AG04450 (cell line): ENCODE measurements at regions of chr2 and their contacts with region 1.

Region 1: GRCh38 chr2:121400201-121400600 is 115.2 kb upstream of the TFCP2L1 start:
- DNase-seq: peak; percentile 24
- H3K4me3 ChIP-seq: no peak overlapping the region
- H3K27ac ChIP-seq: no peak overlapping the region
- H3K27me3 ChIP-seq: no peaks in the 10 kb centered on the region
- CTCF ChIP-seq: no peak

Region 2: DNA sequence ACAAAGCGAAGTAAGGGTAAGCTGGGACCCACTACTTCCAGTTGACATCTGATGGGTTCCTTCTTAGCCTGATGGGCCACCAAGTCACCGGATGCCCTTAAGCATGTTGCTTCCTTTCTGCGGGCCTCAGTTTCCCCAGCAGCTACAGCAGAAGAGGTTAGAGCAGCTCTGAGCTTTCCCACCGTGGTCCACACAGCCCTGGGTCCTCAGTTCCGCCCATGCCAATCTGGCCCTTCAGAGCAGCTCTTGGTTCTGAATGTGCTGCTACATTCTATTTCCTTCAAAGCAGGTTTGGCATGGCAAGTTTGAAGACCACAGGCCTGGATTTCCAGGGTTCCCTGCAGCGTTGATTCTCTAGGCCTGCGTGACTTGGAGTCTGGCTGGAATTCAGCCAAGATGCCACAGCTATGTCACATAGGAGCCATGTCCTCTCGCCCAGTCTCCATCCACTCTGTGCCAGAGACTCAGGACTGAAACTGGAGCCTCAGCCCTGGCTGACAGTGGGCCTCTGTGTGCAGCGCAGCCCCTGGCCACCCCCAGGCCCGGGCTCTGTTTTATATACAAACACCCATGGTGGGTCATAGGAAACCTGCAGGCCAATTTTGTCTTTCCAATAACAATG is 194.8 kb before region 1 on chr2:
- CTCF ChIA-PET with region 1: no interaction called
- POLR2A ChIA-PET with region 1: no interaction called
- DNase-seq: no peak
- H3K4me3 ChIP-seq: no peak overlapping the region
- H3K27ac ChIP-seq: no peak overlapping the region
- H3K27me3 ChIP-seq: peaks cover 12% of the 10 kb centered on the region
- CTCF ChIP-seq: no peak

Region 3: DNA sequence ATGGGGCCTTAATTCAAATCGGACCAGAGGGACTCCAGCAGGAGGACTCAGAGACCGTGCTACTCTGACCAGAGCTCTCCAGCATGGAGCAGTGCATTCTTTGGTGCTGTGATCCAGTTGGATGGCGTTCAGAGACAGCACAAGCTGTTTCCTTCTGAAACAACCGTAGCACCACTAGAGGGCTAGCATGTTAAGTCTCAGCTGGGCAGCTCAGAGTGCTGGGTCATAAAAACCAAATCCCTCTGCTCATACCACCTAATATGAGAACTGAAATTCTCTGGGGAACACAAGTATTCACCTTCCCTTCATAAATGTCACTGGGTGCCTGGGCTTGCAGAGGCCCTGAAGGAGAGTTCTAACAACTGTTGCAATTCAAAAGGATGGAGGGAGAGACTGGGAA is 17.5 kb before region 1 on chr2:
- CTCF ChIA-PET with region 1: interaction called, 16 read pairs
- POLR2A ChIA-PET with region 1: no interaction called
- DNase-seq: no peak
- H3K4me3 ChIP-seq: no peak overlapping the region
- H3K27ac ChIP-seq: no peak overlapping the region
- H3K27me3 ChIP-seq: no peaks in the 10 kb centered on the region
- CTCF ChIP-seq: peak; percentile 39

Region 4: DNA sequence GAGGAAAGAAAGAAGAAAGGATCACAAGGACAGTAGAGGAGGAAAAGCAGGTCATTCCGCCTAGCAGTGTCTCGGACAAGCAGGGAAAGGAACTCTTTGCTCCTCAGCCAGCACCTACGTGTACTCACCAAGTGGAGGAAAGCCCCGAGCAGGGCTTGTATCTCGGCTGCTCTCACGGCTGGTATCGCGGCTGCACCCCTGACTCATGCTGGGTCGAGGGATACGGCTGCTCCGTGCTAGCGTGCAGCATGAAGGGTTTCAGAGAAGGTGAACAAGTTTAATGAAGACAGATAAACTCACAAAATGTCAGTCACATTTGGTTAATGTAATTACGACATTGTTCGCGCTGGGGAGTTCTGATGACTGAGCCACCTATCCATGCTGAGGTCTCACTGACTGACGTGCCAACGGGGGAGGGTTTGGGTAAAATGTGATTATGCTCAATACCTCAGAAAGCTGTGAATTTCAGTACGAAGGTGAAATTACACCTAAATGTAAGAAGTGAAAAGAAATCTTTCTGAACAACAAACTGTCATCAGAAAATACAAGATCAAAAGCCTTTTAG is 18.4 kb after region 1 on chr2:
- CTCF ChIA-PET with region 1: interaction called, 41 read pairs
- POLR2A ChIA-PET with region 1: no interaction called
- DNase-seq: no peak
- H3K4me3 ChIP-seq: no peak overlapping the region
- H3K27ac ChIP-seq: no peak overlapping the region
- H3K27me3 ChIP-seq: no peaks in the 10 kb centered on the region
- CTCF ChIP-seq: no peak

Region 5: GRCh38 chr2:121446647-121447241 is 46.5 kb after region 1 on chr2:
- CTCF ChIA-PET with region 1: interaction called, 19 read pairs
- POLR2A ChIA-PET with region 1: no interaction called
- DNase-seq: no peak
- H3K4me3 ChIP-seq: no peak overlapping the region
- H3K27ac ChIP-seq: no peak overlapping the region
- H3K27me3 ChIP-seq: no peaks in the 10 kb centered on the region
- CTCF ChIP-seq: no peak

Region 6: GRCh38 chr2:121605820-121606733 is 205.9 kb after region 1 on chr2:
- CTCF ChIA-PET with region 1: no interaction called
- POLR2A ChIA-PET with region 1: no interaction called
- DNase-seq: no peak
- H3K4me3 ChIP-seq: no peak overlapping the region
- H3K27ac ChIP-seq: no peak overlapping the region
- H3K27me3 ChIP-seq: no peaks in the 10 kb centered on the region
- CTCF ChIP-seq: no peak

Region 7: GRCh38 chr2:121748202-121748601 is 348.0 kb after region 1 on chr2:
- CTCF ChIA-PET with region 1: interaction called, 12 read pairs
- POLR2A ChIA-PET with region 1: no interaction called
- DNase-seq: peak; percentile 10
- H3K4me3 ChIP-seq: no peak overlapping the region
- H3K27ac ChIP-seq: no peak overlapping the region
- H3K27me3 ChIP-seq: peaks cover 3% of the 10 kb centered on the region
- CTCF ChIP-seq: peak; percentile 53

Region 8: GRCh38 chr2:121828281-121828731 is 428.1 kb after region 1 on chr2:
- CTCF ChIA-PET with region 1: no interaction called
- POLR2A ChIA-PET with region 1: no interaction called
- DNase-seq: no peak
- H3K4me3 ChIP-seq: no peak overlapping the region
- H3K27ac ChIP-seq: no peak overlapping the region
- H3K27me3 ChIP-seq: peaks cover under 1% of the 10 kb centered on the region
- CTCF ChIP-seq: no peak